ENCODE measurements at regions of chr2 and their contacts with region 1.

Region 1: GRCh38 chr2:166127217-166128155 is at the start of gene SCN1A:
- DNase-seq: peak; percentile 28

Region 2: GRCh38 chr2:166057370-166058164 is 69.9 kb before region 1 on chr2:
- CTCF ChIA-PET with region 1: interaction called, 11 read pairs
- POLR2A ChIA-PET with region 1: no interaction called
- DNase-seq: peak; percentile 7

Region 3: GRCh38 chr2:166081131-166081632 is 46.3 kb before region 1 on chr2:
- CTCF ChIA-PET with region 1: no interaction called
- POLR2A ChIA-PET with region 1: no interaction called
- DNase-seq: no peak

Measured in HEK293T (cell line).